PC-3 (cell line): ENCODE measurements at regions of chr3 and their contacts with region 1.

Region 1: DNA sequence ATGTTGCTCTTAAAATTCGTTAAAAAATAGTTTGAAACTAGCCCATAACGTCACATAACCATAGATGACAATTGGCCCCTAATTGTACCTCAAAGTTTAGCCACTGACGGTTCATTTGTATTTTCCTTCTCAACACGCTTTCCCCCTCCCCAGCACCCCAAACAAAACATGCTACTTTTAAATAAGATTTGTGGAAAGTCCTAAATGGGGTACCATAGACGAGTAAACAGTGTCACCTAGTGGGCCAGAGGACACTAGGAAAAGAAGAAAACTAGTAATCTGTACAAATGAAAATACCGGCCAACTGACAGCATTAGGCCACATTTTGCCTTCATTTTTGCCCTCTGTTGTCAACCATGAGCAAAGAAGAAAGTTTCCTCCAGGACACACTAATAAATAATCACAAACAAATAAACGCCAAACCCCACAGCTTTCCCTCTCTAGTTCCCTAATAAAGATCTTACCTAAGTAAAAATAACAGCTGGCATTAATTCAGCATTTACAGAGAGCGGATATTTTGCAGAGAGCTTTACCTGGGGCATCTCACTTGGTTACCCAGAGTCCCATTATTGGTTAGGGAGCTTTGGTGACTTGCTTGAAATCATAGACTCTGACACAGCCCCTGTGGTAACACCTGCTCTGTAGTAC is 175.1 kb upstream of the ATP11B start:
- DNase-seq: peak; percentile 78
- ATAC-seq: peak; percentile 77
- H3K4me3 ChIP-seq: no peak overlapping the region
- H3K27ac ChIP-seq: peak overlapping the region; percentile 47
- H3K4me1 ChIP-seq: peaks cover 27% of the 10 kb centered on the region
- H3K27me3 ChIP-seq: no peaks in the 10 kb centered on the region
- CTCF ChIP-seq: peak; percentile 95

Region 2: DNA sequence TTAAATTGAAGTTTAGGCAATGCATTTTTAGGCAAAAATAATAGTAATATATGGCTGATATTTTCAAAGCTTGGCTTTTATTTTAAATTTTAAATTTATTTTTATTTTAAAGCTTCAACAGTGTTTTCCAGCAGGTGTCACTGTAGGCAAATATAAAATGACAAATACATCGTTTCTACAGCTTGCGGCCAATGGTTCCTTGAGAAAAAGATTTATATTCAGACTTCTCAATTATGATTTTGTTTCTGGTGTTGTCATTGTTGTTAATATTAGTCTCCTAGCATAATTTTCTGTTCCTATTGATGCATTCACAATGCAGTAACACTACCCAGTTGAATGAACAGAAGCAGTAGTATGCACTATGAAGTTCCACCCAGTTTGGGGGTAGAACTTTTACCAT is 1407.9 kb before region 1 on chr3:
- CTCF ChIA-PET with region 1: no interaction called
- POLR2A ChIA-PET with region 1: no interaction called
- intact Hi-C with region 1: loop called (anchors 5 kb)
- DNase-seq: peak; percentile 47
- ATAC-seq: no peak
- H3K4me3 ChIP-seq: no peak overlapping the region
- H3K27ac ChIP-seq: no peak overlapping the region
- H3K4me1 ChIP-seq: no peaks in the 10 kb centered on the region
- H3K27me3 ChIP-seq: peaks cover 31% of the 10 kb centered on the region; the same call in 1 of the 2 replicates
- CTCF ChIP-seq: peak; percentile 49

Region 3: GRCh38 chr3:181230258-181230657 is 1388.0 kb before region 1 on chr3:
- CTCF ChIA-PET with region 1: no interaction called
- POLR2A ChIA-PET with region 1: no interaction called
- intact Hi-C with region 1: no loop called
- DNase-seq: no peak
- ATAC-seq: no peak
- H3K4me3 ChIP-seq: no peak overlapping the region
- H3K27ac ChIP-seq: no peak overlapping the region
- H3K4me1 ChIP-seq: no peaks in the 10 kb centered on the region
- H3K27me3 ChIP-seq: peaks cover 28% of the 10 kb centered on the region
- CTCF ChIP-seq: no peak

Region 4: DNA sequence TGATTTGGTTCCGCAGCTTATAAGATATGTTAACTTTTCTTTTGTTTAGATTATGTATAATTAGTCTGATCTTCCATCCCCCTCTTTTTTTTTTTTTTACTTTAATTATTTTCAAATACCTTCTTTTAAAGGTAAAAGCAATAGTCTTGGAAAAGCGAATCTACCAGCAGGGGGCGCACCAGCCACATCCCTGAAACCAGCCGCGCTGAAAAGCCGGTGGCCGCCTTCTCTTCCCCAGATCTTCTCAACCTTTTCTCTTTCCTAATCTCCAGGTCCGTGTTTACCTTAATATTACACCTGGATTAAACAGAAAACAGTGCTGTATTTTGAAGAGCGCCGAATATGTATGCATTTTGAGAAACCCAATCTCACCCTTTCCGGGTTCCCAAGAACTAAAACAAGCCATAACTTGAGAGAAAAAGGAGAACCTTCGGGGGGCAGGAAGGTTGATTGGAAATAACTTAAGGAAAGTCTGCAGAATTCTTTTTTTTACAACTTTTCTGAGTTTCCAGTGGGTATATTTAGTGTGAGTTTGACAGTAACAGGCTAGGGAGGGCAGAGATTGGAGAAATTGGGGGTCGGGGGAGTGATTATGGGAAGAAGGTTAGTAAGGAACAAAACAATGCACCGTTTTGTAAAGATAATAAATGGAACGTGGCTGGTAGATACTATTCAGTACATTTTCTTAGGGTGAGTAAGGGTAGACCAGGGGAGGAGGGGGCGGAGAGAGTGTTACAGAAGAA is 908.5 kb before region 1 on chr3:
- CTCF ChIA-PET with region 1: no interaction called
- POLR2A ChIA-PET with region 1: no interaction called
- intact Hi-C with region 1: loop called (anchors 1 kb)
- DNase-seq: peak; percentile 80
- ATAC-seq: peak; percentile 61
- H3K4me3 ChIP-seq: peak overlapping the region; percentile 55
- H3K27ac ChIP-seq: no peak overlapping the region
- H3K4me1 ChIP-seq: peaks cover 9% of the 10 kb centered on the region; the same call in 1 of the 2 replicates
- H3K27me3 ChIP-seq: peaks cover 91% of the 10 kb centered on the region
- CTCF ChIP-seq: peak; percentile 87

Region 5: DNA sequence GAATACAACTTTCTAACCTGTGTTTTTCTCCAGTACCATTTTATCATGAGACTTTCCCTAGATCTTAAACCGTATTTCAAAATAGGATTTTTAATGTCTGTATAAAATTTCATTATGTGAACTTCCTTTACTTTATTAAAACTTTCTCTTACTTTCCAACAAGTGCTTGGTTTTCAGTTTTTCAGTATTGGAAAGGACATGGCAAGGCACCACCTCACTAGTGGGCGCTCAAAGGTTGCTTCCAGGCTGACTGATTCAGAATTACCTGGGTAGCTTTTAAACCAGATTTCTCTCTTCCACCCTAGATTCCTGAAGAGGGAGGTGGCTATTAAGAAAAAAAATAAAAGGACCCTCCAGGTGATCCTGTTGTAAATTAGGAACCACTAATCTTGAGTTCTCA is 669.9 kb before region 1 on chr3:
- CTCF ChIA-PET with region 1: no interaction called
- POLR2A ChIA-PET with region 1: no interaction called
- intact Hi-C with region 1: loop called (anchors 2 kb)
- DNase-seq: peak; percentile 48
- ATAC-seq: peak; percentile 31; the same call in 1 of the 2 replicates
- H3K4me3 ChIP-seq: no peak overlapping the region
- H3K27ac ChIP-seq: no peak overlapping the region
- H3K4me1 ChIP-seq: no peaks in the 10 kb centered on the region
- H3K27me3 ChIP-seq: peaks cover 4% of the 10 kb centered on the region; the same call in 1 of the 2 replicates
- CTCF ChIP-seq: peak; percentile 69

Region 6: GRCh38 chr3:182258538-182259177 is 359.6 kb before region 1 on chr3:
- CTCF ChIA-PET with region 1: no interaction called
- POLR2A ChIA-PET with region 1: no interaction called
- intact Hi-C with region 1: loop called (anchors 2 kb)
- DNase-seq: peak; percentile 66
- ATAC-seq: peak; percentile 75
- H3K4me3 ChIP-seq: no peak overlapping the region
- H3K27ac ChIP-seq: no peak overlapping the region
- H3K4me1 ChIP-seq: no peaks in the 10 kb centered on the region
- H3K27me3 ChIP-seq: no peaks in the 10 kb centered on the region
- CTCF ChIP-seq: peak; percentile 87

Region 7: GRCh38 chr3:182490596-182491491 is 127.4 kb before region 1 on chr3:
- CTCF ChIA-PET with region 1: no interaction called
- POLR2A ChIA-PET with region 1: no interaction called
- intact Hi-C with region 1: loop called (anchors 2 kb)
- DNase-seq: peak; percentile 66
- ATAC-seq: peak; percentile 71
- H3K4me3 ChIP-seq: no peak overlapping the region
- H3K27ac ChIP-seq: no peak overlapping the region
- H3K4me1 ChIP-seq: peaks cover 9% of the 10 kb centered on the region; the same call in 1 of the 2 replicates
- H3K27me3 ChIP-seq: no peaks in the 10 kb centered on the region
- CTCF ChIP-seq: peak; percentile 84